CD8-positive, alpha-beta T cell (primary cell): ENCODE measurements at regions of chr14 and their contacts with region 1.

Region 1: DNA sequence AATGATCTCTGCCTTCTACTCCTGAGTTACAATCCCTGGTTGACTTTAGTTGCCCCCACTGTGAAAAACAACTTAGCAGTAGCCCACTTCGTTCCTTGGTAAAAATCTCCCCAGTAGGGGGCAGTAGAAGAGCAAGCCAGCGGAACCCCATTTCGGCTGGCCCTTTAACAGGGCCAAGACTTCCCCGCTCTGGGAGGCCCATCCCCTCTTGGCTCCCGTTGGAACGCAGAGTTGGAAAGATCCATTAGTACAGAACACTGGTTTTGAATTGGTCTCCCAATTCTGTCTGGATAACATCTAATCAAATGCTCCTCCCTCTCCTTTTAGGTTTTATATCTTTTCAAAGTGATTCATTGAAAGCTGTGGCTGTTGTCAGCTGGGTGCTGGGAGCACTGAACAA is 1133.3 kb downstream of the BCL11B start:
- DNase-seq: peak; percentile 34 to 88 (median 72)
- ATAC-seq: peak; percentile 52
- H3K4me3 ChIP-seq: peak overlapping the region; percentile 2 to 56
- H3K4me3 Mint-ChIP-seq: peak overlapping the region; percentile 89
- H3K27ac ChIP-seq: peak overlapping the region; percentile 45 to 50
- H3K27ac Mint-ChIP-seq: peak overlapping the region; percentile 92
- H3K4me1 ChIP-seq: peaks cover 88% of the 10 kb centered on the region
- H3K4me1 Mint-ChIP-seq: peaks cover 91% of the 10 kb centered on the region
- H3K27me3 ChIP-seq: no peaks in the 10 kb centered on the region
- H3K27me3 Mint-ChIP-seq: no peaks in the 10 kb centered on the region
- CTCF ChIP-seq: peak; percentile 82

Region 2: GRCh38 chr14:97620066-97620465 is 518.6 kb before region 1 on chr14:
- CTCF ChIA-PET with region 1: no interaction called
- POLR2A ChIA-PET with region 1: no interaction called
- intact Hi-C with region 1: loop called in 1 of 2 experiments (anchors 10 kb)
- DNase-seq: peak in 1 of 9 experiments; percentile 42
- ATAC-seq: peak; percentile 15
- H3K4me3 ChIP-seq: peak overlapping the region in 1 of 2 experiments; percentile 12
- H3K4me3 Mint-ChIP-seq: peak overlapping the region; percentile 83
- H3K27ac ChIP-seq: peak overlapping the region; percentile 36 to 84
- H3K27ac Mint-ChIP-seq: peak overlapping the region; percentile 98
- H3K4me1 ChIP-seq: peaks cover 43% of the 10 kb centered on the region
- H3K4me1 Mint-ChIP-seq: peaks cover 53% of the 10 kb centered on the region
- H3K27me3 ChIP-seq: no peaks in the 10 kb centered on the region
- H3K27me3 Mint-ChIP-seq: no peaks in the 10 kb centered on the region
- CTCF ChIP-seq: no peak

Region 3: GRCh38 chr14:97994020-97994531 is 144.6 kb before region 1 on chr14:
- CTCF ChIA-PET with region 1: interaction called, 23 read pairs
- POLR2A ChIA-PET with region 1: interaction called, 6 read pairs
- intact Hi-C with region 1: no loop called
- DNase-seq: peak in 7 of 9 experiments; percentile 7 to 79 (median 58)
- ATAC-seq: peak; percentile 81
- H3K4me3 ChIP-seq: no peak overlapping the region
- H3K4me3 Mint-ChIP-seq: peak overlapping the region; percentile 9
- H3K27ac ChIP-seq: peak overlapping the region; percentile 62 to 83
- H3K27ac Mint-ChIP-seq: peak overlapping the region; percentile 98
- H3K4me1 ChIP-seq: peaks cover 66% of the 10 kb centered on the region
- H3K4me1 Mint-ChIP-seq: peaks cover 84% of the 10 kb centered on the region
- H3K27me3 ChIP-seq: no peaks in the 10 kb centered on the region
- H3K27me3 Mint-ChIP-seq: no peaks in the 10 kb centered on the region
- CTCF ChIP-seq: no peak

Region 4: DNA sequence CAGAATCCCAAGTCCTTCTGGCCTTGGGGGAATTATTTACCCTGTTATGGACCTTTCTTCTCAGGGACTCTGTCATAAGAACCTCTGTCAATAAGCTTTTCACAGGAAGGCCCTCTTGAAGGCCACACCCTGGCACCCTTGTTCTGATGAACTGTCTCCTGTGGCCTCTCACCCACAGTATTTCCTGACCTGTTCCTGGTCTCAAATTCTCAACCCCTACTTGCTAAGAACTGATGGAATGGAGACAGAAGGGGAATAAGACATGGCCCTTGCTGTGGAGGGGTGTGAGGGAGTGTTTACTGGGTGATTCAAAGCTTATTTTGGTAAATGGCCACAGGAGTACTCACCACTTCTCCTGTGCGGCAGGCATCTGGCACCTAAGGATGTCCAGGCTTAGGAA is 50.4 kb after region 1 on chr14:
- CTCF ChIA-PET with region 1: interaction called, 283 read pairs
- POLR2A ChIA-PET with region 1: interaction called, 105 read pairs
- intact Hi-C with region 1: loop called (anchors 1 to 5 kb)
- DNase-seq: peak in 3 of 9 experiments; percentile 47 to 71 (median 70)
- ATAC-seq: peak; percentile 34
- H3K4me3 ChIP-seq: peak overlapping the region; percentile 13 to 20
- H3K4me3 Mint-ChIP-seq: peak overlapping the region; percentile 67
- H3K27ac ChIP-seq: peak overlapping the region; percentile 78 to 81
- H3K27ac Mint-ChIP-seq: peak overlapping the region; percentile 95
- H3K4me1 ChIP-seq: peaks cover 99% of the 10 kb centered on the region
- H3K4me1 Mint-ChIP-seq: peaks cover 98% of the 10 kb centered on the region
- H3K27me3 ChIP-seq: no peaks in the 10 kb centered on the region
- H3K27me3 Mint-ChIP-seq: no peaks in the 10 kb centered on the region
- CTCF ChIP-seq: no peak

Region 5: DNA sequence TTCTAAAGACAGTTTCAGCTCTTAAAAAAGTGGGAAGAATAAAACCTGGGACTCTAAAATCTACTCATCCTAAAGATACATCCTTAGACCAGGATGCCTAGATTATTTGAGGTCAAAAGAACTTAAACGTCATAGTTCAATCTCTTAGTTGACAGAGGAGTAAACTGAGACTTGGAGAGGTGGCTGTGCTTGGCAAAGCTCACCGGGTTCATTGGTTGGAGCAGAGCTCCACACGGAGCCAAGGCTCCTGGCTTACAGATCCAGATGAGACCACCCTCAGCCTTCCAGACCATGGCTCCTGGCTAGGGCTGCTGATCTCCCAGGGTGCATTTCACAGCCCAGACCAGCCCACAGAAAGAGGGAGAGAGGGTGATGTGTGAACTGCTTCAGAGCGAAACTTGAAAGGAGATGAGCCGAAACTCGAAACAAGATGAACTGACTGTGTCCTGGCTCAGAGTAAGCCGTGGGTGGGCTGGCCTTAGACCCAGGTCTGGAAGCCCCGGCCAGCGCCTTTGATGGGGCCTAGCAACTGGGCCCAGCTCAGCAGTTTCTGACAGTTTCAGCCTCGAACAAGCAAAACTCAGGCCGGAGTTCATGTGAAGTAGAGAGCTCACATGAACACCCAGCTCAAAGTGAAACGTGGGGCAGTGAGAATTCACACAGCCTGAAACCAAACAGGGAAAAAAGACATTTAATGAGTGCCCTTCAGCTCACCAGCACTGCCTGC is 88.5 kb after region 1 on chr14:
- CTCF ChIA-PET with region 1: interaction called, 17 read pairs
- POLR2A ChIA-PET with region 1: interaction called, 3 read pairs
- intact Hi-C with region 1: loop called in 1 of 2 experiments (anchors 2 kb)
- DNase-seq: peak in 2 of 9 experiments; percentile 32 to 57
- ATAC-seq: no peak
- H3K4me3 ChIP-seq: peak overlapping the region in 1 of 2 experiments; percentile 25
- H3K4me3 Mint-ChIP-seq: peak overlapping the region; percentile 67
- H3K27ac ChIP-seq: peak overlapping the region; percentile 41 to 63
- H3K27ac Mint-ChIP-seq: peak overlapping the region; percentile 92
- H3K4me1 ChIP-seq: peaks cover 92% of the 10 kb centered on the region
- H3K4me1 Mint-ChIP-seq: peaks cover 89% of the 10 kb centered on the region
- H3K27me3 ChIP-seq: no peaks in the 10 kb centered on the region
- H3K27me3 Mint-ChIP-seq: no peaks in the 10 kb centered on the region
- CTCF ChIP-seq: no peak

Region 6: GRCh38 chr14:99192028-99192621 is 1053.5 kb after region 1 on chr14:
- CTCF ChIA-PET with region 1: interaction called, 4 read pairs
- POLR2A ChIA-PET with region 1: interaction called, 3 read pairs
- intact Hi-C with region 1: loop called (anchors 5 kb)
- DNase-seq: peak in 3 of 9 experiments; percentile 55 to 75 (median 64)
- ATAC-seq: peak; percentile 38
- H3K4me3 ChIP-seq: peak overlapping the region; percentile 36 to 44
- H3K4me3 Mint-ChIP-seq: peak overlapping the region; percentile 87
- H3K27ac ChIP-seq: peak overlapping the region; percentile 71 to 76
- H3K27ac Mint-ChIP-seq: peak overlapping the region; percentile 99
- H3K4me1 ChIP-seq: peaks cover 97% of the 10 kb centered on the region
- H3K4me1 Mint-ChIP-seq: peaks cover 96% of the 10 kb centered on the region
- H3K27me3 ChIP-seq: no peaks in the 10 kb centered on the region
- H3K27me3 Mint-ChIP-seq: no peaks in the 10 kb centered on the region
- CTCF ChIP-seq: no peak